ENCODE measurements at regions of chr10 and their contacts with region 1.

Region 1: GRCh38 chr10:76036111-76036940 is 604.9 kb downstream of the LRMDA start:
- DNase-seq: no peak
- H3K4me3 ChIP-seq: no peak overlapping the region
- H3K27me3 ChIP-seq: no peaks in the 10 kb centered on the region
- CTCF ChIP-seq: peak; percentile 94

Region 2: GRCh38 chr10:75401569-75402485 is 634.5 kb before region 1 on chr10 and contains the start of gene ZNF503:
- CTCF ChIA-PET with region 1: interaction called, 41 read pairs
- POLR2A ChIA-PET with region 1: no interaction called
- DNase-seq: peak; percentile 78
- H3K4me3 ChIP-seq: peak within 1 kb of the TSS; percentile 80
- H3K27me3 ChIP-seq: 0 out of 2 replicates have a peak, but pooled peaks cover 2% of the 10 kb centered on the region
- CTCF ChIP-seq: peak; percentile 27; the same call in 1 of the 2 replicates
- polyA plus RNA-seq, gene ZNF503: 0.45 and 0.51 TPM in 2 replicates

Region 3: GRCh38 chr10:76047521-76047920 is 11.2 kb after region 1 on chr10:
- CTCF ChIA-PET with region 1: interaction called, 16 read pairs
- POLR2A ChIA-PET with region 1: no interaction called
- DNase-seq: no peak
- H3K4me3 ChIP-seq: no peak overlapping the region
- H3K27me3 ChIP-seq: peaks cover 6% of the 10 kb centered on the region
- CTCF ChIP-seq: no peak